ENCODE measurements at regions of chr1 and their contacts with region 1.

Region 1: DNA sequence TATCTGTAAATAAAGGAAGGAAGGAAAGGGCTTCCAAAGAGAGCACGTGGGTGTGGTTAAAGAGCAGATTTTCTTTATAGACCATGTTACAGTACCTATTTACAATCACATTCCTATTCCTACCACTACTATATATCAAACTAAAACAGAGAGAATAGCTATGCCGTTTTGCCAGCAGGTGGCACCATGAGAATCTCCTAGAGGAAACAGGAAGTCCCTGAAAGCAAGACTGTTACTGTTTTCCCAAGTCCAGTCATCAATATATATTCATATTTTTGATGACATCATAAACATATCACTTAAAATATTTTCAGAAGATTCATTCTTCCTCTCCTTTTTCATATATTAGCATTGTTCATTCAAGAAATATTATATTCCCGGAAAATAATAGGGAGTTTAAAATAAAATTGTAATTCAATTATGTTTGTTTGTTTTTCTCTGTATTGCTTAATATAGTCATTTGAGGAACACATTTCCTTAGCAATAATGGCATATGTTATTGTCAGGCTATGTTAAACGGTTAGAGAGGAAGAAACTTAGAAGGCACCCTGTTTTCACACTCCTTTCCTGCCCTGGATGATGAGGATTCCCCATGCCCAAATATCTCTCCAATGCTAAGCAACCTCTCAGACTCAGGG is 6.6 kb downstream of the CCDC190 start:
- DNase-seq: peak in 28 of 35 experiments; percentile 6 to 65 (median 24)
- ATAC-seq: peak in 1 of 4 experiments; percentile 44
- H3K4me3 ChIP-seq: no peak overlapping the region
- H3K4me3 Mint-ChIP-seq: no peak overlapping the region
- H3K27ac ChIP-seq: no peak overlapping the region
- H3K27ac Mint-ChIP-seq: no peak overlapping the region
- H3K4me1 ChIP-seq: no peaks in the 10 kb centered on the region
- H3K4me1 Mint-ChIP-seq: no peaks in the 10 kb centered on the region
- H3K27me3 ChIP-seq: peaks cover 2 to 5% of the 10 kb centered on the region in 2 experiments
- H3K27me3 Mint-ChIP-seq: peaks cover 14 to 16% of the 10 kb centered on the region in 2 donors

Region 2: GRCh38 chr1:162218975-162219374 is 635.4 kb before region 1 on chr1:
- CTCF ChIA-PET with region 1: no interaction called
- POLR2A ChIA-PET with region 1: no interaction called
- DNase-seq: no peak
- ATAC-seq: no peak
- H3K4me3 ChIP-seq: no peak overlapping the region
- H3K4me3 Mint-ChIP-seq: no peak overlapping the region
- H3K27ac ChIP-seq: no peak overlapping the region
- H3K27ac Mint-ChIP-seq: no peak overlapping the region
- H3K4me1 ChIP-seq: no peaks in the 10 kb centered on the region
- H3K4me1 Mint-ChIP-seq: no peaks in the 10 kb centered on the region
- H3K27me3 ChIP-seq: peaks cover 0 to 8% of the 10 kb centered on the region in 2 experiments
- H3K27me3 Mint-ChIP-seq: peaks cover 27 to 41% of the 10 kb centered on the region in 2 donors

Region 3: GRCh38 chr1:163315773-163316374 is 461.5 kb after region 1 on chr1:
- CTCF ChIA-PET with region 1: interaction called, 10 to 50 read pairs
- POLR2A ChIA-PET with region 1: no interaction called
- DNase-seq: peak in 28 of 35 experiments; percentile 3 to 71 (median 31)
- ATAC-seq: no peak
- H3K4me3 ChIP-seq: no peak overlapping the region
- H3K4me3 Mint-ChIP-seq: no peak overlapping the region
- H3K27ac ChIP-seq: no peak overlapping the region
- H3K27ac Mint-ChIP-seq: no peak overlapping the region
- H3K4me1 ChIP-seq: peaks cover 2% of the 10 kb centered on the region in 2 experiments
- H3K4me1 Mint-ChIP-seq: peaks cover 2 to 4% (median 3%) of the 10 kb centered on the region in 3 donors
- H3K27me3 ChIP-seq: no peaks in the 10 kb centered on the region
- H3K27me3 Mint-ChIP-seq: no peaks in the 10 kb centered on the region